Ovary (tissue), 10 donors: ENCODE measurements at regions of chrX and their contacts with region 1.

Region 1: DNA sequence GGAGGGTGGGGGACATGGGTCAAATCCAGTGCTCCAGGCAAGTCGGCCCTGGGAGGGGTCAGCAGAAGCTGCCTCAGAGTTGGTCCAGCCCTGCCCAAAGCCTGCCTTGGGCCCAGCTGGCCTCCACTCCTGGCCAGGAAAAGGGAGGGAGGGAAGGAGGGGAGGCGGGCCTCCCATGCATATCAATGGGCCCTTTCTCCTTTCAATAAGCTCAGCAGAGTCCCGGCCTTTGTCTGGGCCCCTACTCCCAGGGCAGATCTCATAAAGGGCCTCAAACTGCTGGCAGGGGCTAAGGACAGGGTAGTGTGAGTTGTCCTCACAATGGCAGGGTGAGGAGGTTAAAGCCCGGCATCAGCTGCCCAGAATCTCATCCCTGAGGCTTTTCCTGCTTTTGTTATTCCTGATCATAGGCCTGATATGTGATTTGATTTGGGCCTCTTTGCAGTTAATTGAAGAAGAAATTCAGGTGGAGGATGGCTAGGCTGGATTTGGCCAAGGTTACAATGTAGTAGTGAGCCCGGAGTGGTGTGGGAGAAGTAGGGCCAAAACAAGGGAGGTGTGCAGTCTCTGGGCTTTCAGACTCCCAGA is 121.1 kb upstream of the ATP6AP2 start:
- DNase-seq: no peak
- H3K4me3 ChIP-seq: no peak overlapping the region
- H3K27ac ChIP-seq: no peak overlapping the region
- H3K4me1 ChIP-seq: no peaks in the 10 kb centered on the region
- H3K27me3 ChIP-seq: no peaks in the 10 kb centered on the region
- CTCF ChIP-seq: no peak
- EP300 ChIP-seq: no peak
- POLR2A ChIP-seq: no peak

Region 2: DNA sequence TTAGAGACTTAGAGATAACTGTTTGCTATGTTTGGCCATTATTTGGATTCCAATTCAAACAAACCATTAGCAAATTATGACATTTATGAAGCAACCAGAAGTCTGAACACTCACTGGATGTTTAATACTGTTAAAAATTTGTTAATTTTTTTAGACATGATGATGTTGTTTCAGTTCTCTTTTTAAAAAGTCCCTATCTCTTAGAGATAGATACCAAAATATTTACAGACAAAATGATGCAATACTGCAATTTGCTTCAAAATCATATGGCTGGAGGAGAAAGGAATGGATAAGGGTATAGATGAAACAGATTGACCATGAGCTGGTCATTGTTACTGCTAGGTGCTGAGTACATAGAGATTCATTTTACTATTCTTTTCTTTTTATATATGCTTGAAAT is 896.5 kb before region 1 on chrX:
- intact Hi-C with region 1: no loop called
- DNase-seq: no peak
- H3K4me3 ChIP-seq: no peak overlapping the region
- H3K27ac ChIP-seq: no peak overlapping the region
- H3K4me1 ChIP-seq: peaks cover 2% of the 10 kb centered on the region
- H3K27me3 ChIP-seq: no peaks in the 10 kb centered on the region
- CTCF ChIP-seq: no peak
- EP300 ChIP-seq: no peak
- POLR2A ChIP-seq: no peak

Region 3: GRCh38 chrX:40273356-40274050 is 186.2 kb before region 1 on chrX:
- intact Hi-C with region 1: loop called in 1 of 4 experiments (anchors 10 kb)
- DNase-seq: peak in 2 of 5 donors; percentile 31 to 42
- H3K4me3 ChIP-seq: no peak overlapping the region
- H3K27ac ChIP-seq: no peak overlapping the region
- H3K4me1 ChIP-seq: peaks cover 5% of the 10 kb centered on the region
- H3K27me3 ChIP-seq: no peaks in the 10 kb centered on the region
- CTCF ChIP-seq: no peak
- EP300 ChIP-seq: no peak
- POLR2A ChIP-seq: no peak

Region 4: GRCh38 chrX:40420899-40421729 is 38.6 kb before region 1 on chrX:
- intact Hi-C with region 1: no loop called
- DNase-seq: no peak
- H3K4me3 ChIP-seq: no peak overlapping the region
- H3K27ac ChIP-seq: no peak overlapping the region
- H3K4me1 ChIP-seq: no peaks in the 10 kb centered on the region
- H3K27me3 ChIP-seq: no peaks in the 10 kb centered on the region
- CTCF ChIP-seq: no peak
- EP300 ChIP-seq: no peak
- POLR2A ChIP-seq: no peak

Region 5: GRCh38 chrX:40685362-40685918 is 225.8 kb after region 1 on chrX:
- intact Hi-C with region 1: no loop called
- DNase-seq: no peak
- H3K4me3 ChIP-seq: no peak overlapping the region
- H3K27ac ChIP-seq: no peak overlapping the region
- H3K4me1 ChIP-seq: no peaks in the 10 kb centered on the region
- H3K27me3 ChIP-seq: no peaks in the 10 kb centered on the region
- CTCF ChIP-seq: no peak
- EP300 ChIP-seq: no peak
- POLR2A ChIP-seq: no peak